ENCODE measurements at regions of chr2 and their contacts with region 1.

Region 1: DNA sequence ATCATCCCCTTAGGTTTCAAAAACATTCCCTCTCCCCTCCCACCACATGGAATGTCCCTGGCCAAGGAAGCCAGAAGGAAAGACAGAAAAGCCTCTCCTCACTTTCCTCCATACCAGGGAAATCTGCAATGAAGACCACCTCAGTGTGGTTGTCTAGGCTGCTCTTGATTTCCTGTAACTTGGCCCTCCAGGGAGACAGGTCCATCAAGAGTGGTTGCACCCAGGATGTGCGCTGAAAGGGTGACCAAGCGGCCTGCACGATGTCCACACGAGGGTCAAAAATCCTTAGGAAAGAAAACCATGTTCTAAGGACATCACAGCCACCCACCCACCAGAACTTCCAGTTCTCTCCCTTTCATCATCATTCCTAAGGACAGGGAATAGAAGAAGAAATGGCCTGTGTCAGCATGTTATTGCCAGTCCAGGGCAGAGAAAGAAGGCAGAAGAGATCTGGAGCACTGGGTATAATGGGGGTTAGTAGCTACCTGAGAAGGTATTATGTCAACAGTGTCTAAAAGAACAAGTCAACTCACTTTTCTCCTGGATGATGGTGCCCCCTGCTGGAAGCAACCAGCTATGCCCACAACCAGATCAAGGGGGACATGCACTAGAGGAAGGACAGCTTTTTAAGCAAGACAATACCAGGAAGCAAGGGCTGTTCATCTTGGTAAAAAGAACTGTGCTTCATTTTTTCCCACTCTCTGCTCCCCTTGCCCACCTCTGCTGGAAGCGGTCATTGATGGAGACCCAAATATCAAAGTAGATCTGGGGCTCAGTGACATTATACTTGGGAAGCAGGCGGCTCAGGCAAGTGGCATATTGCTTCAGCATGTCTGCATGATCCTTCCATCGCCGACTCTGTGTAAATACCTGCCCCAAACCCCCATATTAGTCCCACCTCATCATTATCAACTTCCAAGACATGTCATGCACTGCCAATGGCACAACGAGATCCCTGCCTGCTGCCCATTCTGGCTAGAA is 9.3 kb downstream of the GGCX start:
- DNase-seq: peak; percentile 91
- H3K4me3 Mint-ChIP-seq: no peak overlapping the region
- H3K27ac Mint-ChIP-seq: peak overlapping the region; percentile 7
- H3K4me1 Mint-ChIP-seq: peaks cover 5% of the 10 kb centered on the region
- H3K27me3 Mint-ChIP-seq: no peaks in the 10 kb centered on the region

Region 2: GRCh38 chr2:85199698-85200097 is 352.3 kb before region 1 on chr2:
- CTCF ChIA-PET with region 1: no interaction called
- POLR2A ChIA-PET with region 1: no interaction called
- DNase-seq: no peak
- H3K4me3 Mint-ChIP-seq: no peak overlapping the region
- H3K27ac Mint-ChIP-seq: no peak overlapping the region
- H3K4me1 Mint-ChIP-seq: no peaks in the 10 kb centered on the region
- H3K27me3 Mint-ChIP-seq: peaks cover 14% of the 10 kb centered on the region

Region 3: DNA sequence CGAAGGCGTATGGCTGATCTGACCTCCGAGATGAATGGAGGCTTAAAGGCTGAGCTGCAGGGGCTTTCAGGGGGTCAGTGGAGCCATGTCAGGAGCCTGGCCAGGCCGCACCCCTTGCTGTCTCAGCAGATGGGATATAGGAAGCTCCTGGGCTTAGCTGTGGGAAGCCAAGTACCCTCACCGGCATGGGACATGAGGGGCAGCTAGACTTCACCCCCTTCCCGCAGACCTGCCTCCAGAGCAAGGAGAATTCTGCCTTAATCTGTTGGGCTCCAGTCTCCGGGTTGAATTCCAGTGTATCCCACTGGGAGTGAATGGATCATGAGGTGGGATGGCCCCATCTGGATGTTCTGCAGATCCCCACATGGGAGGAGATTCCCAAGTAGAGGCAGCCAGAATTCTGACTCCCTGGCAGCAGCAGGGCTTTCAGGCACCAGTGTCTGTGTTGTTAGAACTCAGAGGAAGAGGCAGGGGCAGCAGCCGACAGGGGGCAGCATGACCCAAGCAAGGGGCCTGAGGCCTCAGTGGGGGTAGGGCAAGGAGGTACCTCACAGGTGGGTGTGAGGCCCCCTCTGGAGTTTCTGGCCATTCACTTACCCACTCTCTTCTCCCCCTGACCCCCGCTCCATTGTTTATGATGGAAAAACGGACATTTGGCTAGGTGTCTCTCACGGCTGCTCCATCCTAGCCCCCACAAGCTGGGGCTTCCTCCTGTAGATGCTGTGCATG is 160.9 kb before region 1 on chr2:
- CTCF ChIA-PET with region 1: interaction called, 43 read pairs
- POLR2A ChIA-PET with region 1: interaction called, 4 read pairs
- DNase-seq: peak; percentile 77
- H3K4me3 Mint-ChIP-seq: no peak overlapping the region
- H3K27ac Mint-ChIP-seq: no peak overlapping the region
- H3K4me1 Mint-ChIP-seq: peaks cover 10% of the 10 kb centered on the region
- H3K27me3 Mint-ChIP-seq: no peaks in the 10 kb centered on the region

Region 4: DNA sequence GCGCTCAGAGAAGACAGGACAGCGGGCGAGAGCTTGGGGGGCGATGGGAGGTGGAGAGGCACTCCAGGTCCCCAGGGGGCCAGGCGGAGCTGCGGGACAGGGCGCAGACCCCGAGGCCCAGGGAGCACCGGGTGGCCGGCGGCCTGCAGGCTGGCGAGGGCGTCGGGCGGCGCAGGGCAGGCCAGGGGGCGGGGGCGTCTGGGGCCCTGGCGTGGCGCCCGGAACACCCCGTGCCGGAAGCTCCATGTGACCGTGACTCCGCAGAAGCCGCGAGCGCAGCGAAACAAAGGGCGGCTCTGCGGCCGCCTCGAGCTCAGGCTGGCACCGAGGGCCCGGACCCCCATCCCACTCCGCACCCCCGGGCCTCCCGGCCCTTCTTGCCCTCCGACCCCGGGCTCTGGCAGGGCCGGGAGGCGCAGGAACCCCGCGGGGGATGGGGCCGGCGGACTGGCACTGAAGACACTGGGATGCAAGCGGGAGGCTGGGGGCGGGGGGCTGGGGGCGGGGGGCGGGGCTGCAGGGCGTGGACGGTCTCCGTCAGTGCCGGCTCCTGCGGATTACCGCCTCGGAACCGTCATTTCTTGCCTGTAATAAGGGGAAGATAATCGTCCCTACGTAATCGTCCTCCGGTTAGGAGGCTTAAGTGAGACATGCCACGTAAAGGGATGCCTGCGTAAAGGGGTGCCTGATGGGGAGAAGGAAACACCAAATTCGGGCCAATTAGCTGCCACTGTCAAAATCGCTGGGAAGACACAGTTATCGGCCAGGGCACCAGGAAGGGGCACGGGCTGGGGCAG is 114.3 kb before region 1 on chr2:
- CTCF ChIA-PET with region 1: interaction called, 10 read pairs
- POLR2A ChIA-PET with region 1: interaction called, 11 read pairs
- DNase-seq: peak; percentile 81
- H3K4me3 Mint-ChIP-seq: peak overlapping the region; percentile 77
- H3K27ac Mint-ChIP-seq: peak overlapping the region; percentile 89
- H3K4me1 Mint-ChIP-seq: peaks cover 40% of the 10 kb centered on the region
- H3K27me3 Mint-ChIP-seq: no peaks in the 10 kb centered on the region

Measured in activated CD4-positive, alpha-beta memory T cell treated with anti-CD3 and anti-CD28 coated beads, Interleukin-2, amount 10 ng/mL, durations not matched to agents 7 days and 5 days (primary cell).